Panc1 (cell line): ENCODE measurements at regions of chr17 and their contacts with region 1.

Region 1: GRCh38 chr17:59769891-59770290 is 62.4 kb downstream of the VMP1 start:
- DNase-seq: no peak
- ATAC-seq: 0 out of 2 replicates have a peak, but pooled peaks have one; percentile 26
- H3K4me3 ChIP-seq: no peak overlapping the region
- H3K27ac ChIP-seq: peak overlapping the region; percentile 89; the same call in 1 of the 2 replicates
- H3K4me1 ChIP-seq: peaks cover 21% of the 10 kb centered on the region
- H3K27me3 ChIP-seq: no peaks in the 10 kb centered on the region
- CTCF ChIP-seq: no peak

Region 2: GRCh38 chr17:58006924-58007780 is 1762.7 kb before region 1 on chr17 and contains the start of gene SRSF1:
- CTCF ChIA-PET with region 1: no interaction called
- POLR2A ChIA-PET with region 1: no interaction called
- in situ Hi-C with region 1: no loop called
- intact Hi-C with region 1: no loop called
- DNase-seq: peak; percentile 89
- ATAC-seq: peak; percentile 93
- H3K4me3 ChIP-seq: peak within 1 kb of the TSS; percentile 83 to 94
- H3K27ac ChIP-seq: peak within 1 kb of the TSS; percentile 100
- H3K4me1 ChIP-seq: peaks cover 32% of the 10 kb centered on the region
- H3K27me3 ChIP-seq: no peaks in the 10 kb centered on the region
- CTCF ChIP-seq: no peak
- total RNA-seq, gene SRSF1: 362 TPM

Region 3: DNA sequence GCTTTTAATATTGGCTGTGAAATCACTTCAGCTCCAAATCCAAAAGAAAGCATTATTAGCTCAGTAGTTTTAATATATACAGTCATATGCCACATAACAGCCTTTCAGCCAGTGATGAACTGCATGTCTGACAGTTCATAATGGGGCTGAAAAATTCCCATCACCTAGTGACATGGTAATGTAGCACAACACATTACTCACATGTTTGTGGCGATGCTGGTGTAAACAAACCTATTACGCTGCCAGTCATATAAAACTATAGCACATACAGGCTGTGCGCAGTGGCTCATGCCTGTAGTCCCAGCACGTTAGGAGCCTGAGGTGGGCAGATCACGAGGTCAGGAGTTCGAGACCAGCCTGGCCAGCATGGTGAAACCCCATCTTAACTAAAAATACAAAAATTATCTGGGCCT is 30.6 kb after region 1 on chr17:
- CTCF ChIA-PET with region 1: no interaction called
- POLR2A ChIA-PET with region 1: interaction called, 10 read pairs
- in situ Hi-C with region 1: no loop called
- intact Hi-C with region 1: no loop called
- DNase-seq: no peak
- ATAC-seq: peak; percentile 74
- H3K4me3 ChIP-seq: no peak overlapping the region
- H3K27ac ChIP-seq: peak overlapping the region; percentile 99
- H3K4me1 ChIP-seq: peaks cover 43% of the 10 kb centered on the region
- H3K27me3 ChIP-seq: no peaks in the 10 kb centered on the region
- CTCF ChIP-seq: no peak

Region 4: DNA sequence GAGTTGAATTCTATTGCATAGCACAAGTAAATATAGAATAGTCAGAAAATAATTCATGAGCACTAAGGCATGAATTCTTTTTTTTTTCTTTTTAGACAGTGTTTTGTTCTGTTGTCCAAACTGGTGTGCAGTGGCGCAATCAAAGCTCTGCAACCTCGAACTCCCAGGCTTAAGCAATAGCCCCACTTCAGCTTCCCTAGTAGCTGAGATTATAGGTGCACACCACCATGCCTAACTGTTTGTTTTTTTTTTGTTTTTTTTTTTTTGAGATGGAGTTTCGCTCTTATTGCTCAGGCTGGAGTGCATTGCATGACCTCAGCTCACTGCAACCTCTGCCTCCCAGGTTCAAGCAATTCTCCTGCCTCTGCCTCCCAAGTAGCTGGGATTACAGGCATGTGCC is 106.2 kb after region 1 on chr17:
- CTCF ChIA-PET with region 1: no interaction called
- POLR2A ChIA-PET with region 1: interaction called, 13 read pairs
- in situ Hi-C with region 1: no loop called
- intact Hi-C with region 1: no loop called
- DNase-seq: no peak
- ATAC-seq: no peak
- H3K4me3 ChIP-seq: no peak overlapping the region
- H3K27ac ChIP-seq: no peak overlapping the region
- H3K4me1 ChIP-seq: 0 out of 2 replicates have a peak, but pooled peaks cover under 1% of the 10 kb centered on the region
- H3K27me3 ChIP-seq: no peaks in the 10 kb centered on the region
- CTCF ChIP-seq: no peak